HepG2 (cell line): ENCODE measurements at regions of chr1 and their contacts with region 1.

Region 1: GRCh38 chr1:32247983-32248889 is 1.2 kb downstream of the FAM167B start:
- DNase-seq: peak; percentile 59
- ATAC-seq: peak; percentile 71
- H3K4me3 ChIP-seq: peak overlapping the region in 2 of 3 experiments; percentile 8 to 58; a peak in 2 of 6 replicates
- H3K27ac ChIP-seq: no peak overlapping the region
- H3K4me1 ChIP-seq: peaks cover 83% of the 10 kb centered on the region
- H3K27me3 ChIP-seq: no peaks in the 10 kb centered on the region
- CTCF ChIP-seq: peak; percentile 98
- EP300 ChIP-seq: no peak
- POLR2A ChIP-seq: no peak
- RAD21 ChIP-seq: peak; percentile 94

Region 2: GRCh38 chr1:32234792-32235191 is 13.4 kb before region 1 on chr1:
- CTCF ChIA-PET with region 1: no interaction called
- POLR2A ChIA-PET with region 1: interaction called, 28 read pairs
- in situ Hi-C with region 1: no loop called
- intact Hi-C with region 1: no loop called
- DNase-seq: no peak
- ATAC-seq: peak; percentile 19; the same call in 2 of the 3 replicates
- H3K4me3 ChIP-seq: no peak overlapping the region
- H3K27ac ChIP-seq: no peak overlapping the region
- H3K4me1 ChIP-seq: peaks cover 14% of the 10 kb centered on the region
- H3K27me3 ChIP-seq: no peaks in the 10 kb centered on the region
- CTCF ChIP-seq: peak; percentile 36
- EP300 ChIP-seq: no peak
- POLR2A ChIP-seq: no peak
- RAD21 ChIP-seq: no peak

Region 3: DNA sequence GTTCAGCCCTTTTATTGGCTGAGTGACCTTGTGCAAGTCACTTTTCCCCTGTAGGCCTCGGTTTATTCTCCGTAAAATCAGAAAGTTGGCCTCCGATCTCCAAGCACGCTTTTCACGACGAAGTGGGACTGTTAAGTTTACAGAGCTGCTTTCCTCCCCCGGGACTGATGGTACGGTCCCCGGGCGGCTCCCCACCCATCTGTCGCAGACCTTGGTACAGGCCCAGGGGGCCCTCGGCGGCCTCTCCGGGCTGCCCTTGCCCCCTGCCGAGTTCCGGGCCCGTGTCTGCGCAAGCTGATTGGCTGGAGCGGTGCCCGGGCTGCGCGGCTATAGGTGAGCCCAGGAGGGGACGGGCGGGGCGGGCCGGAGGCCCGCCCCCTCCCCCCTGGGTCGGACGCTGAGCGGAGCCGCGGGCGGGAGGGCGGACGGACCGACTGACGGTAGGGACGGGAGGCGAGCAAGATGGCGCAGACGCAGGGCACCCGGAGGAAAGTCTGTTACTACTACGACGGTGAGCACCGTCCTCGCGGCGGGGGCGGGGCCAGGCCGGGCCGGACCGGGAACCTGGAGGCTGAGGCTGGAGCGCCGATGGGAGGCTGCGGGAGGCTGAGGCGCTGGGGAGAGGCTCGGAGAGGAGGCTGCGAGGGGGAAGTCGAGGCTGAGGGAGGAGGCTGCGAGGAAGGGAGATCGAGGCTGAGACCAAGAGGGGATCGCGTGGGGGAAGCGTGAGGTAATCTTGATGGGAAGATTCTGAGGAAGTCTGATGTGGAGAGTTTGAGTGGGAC is 43.7 kb after region 1 on chr1 and contains the start of gene HDAC1:
- CTCF ChIA-PET with region 1: no interaction called
- POLR2A ChIA-PET with region 1: interaction called, 48 read pairs
- in situ Hi-C with region 1: no loop called
- intact Hi-C with region 1: loop called (anchors 1 kb)
- DNase-seq: peak; percentile 93
- ATAC-seq: peak; percentile 98
- H3K4me3 ChIP-seq: peak within 1 kb of the TSS; percentile 94 to 99 (median 98)
- H3K27ac ChIP-seq: peak within 1 kb of the TSS; percentile 67
- H3K4me1 ChIP-seq: peaks cover 64% of the 10 kb centered on the region
- H3K27me3 ChIP-seq: no peaks in the 10 kb centered on the region; a peak in 1 of 5 replicates
- CTCF ChIP-seq: no peak; the same call in 1 of the 2 replicates
- EP300 ChIP-seq: peak in 1 of 2 experiments; percentile 50; a peak in 2 of 4 replicates
- POLR2A ChIP-seq: peak; percentile 28 to 85; a peak in 3 of 4 replicates
- RAD21 ChIP-seq: 0 out of 2 replicates have a peak, but pooled peaks have one; percentile 10
- total RNA-seq, gene HDAC1: 93.5 and 109 TPM in 2 replicates

Region 4: DNA sequence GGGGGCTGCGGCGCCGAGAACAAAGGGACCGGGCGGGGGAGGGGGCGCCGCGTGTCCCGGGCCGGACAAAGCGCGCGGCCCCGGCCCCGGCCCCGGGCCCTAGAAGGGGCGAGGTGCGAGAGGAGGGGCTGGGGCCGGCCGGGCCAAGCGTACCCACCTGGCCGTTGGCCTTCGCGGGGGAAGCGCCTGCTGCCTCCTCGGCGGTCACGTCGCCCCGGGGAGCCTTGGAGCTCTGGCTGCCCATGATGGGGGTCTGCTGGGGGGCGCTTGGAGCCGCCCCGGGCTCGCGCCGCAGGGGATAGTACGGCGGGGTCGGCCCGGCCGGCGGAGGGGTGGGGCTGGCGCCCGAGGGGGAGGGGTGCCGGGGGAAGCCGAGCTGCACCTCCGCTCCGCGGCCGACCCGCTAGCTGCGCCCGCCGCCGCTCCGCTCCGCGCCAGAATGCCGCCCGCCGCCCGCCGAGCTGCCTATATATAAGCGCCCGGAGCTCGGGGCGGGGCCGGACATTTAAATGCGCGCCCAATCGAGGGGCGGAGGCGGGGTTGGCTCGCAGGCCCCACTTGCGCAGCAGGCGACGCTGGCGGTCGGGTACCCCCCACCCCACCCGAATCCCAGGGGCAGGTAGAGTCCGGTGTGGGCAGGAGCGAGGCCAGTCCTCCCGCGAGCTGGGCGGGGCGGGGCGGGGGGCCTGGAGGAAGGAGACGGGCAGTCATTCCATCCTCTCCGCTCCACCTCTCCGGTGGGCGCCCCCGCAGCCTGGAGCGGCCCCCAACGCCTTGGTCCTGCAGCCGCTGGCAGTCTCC is 87.8 kb after region 1 on chr1 and contains the start of gene MARCKSL1:
- CTCF ChIA-PET with region 1: no interaction called
- POLR2A ChIA-PET with region 1: interaction called, 22 read pairs
- in situ Hi-C with region 1: no loop called
- intact Hi-C with region 1: no loop called
- DNase-seq: peak; percentile 63
- ATAC-seq: peak; percentile 49
- H3K4me3 ChIP-seq: peak within 1 kb of the TSS; percentile 70 to 95 (median 84)
- H3K27ac ChIP-seq: peak within 1 kb of the TSS; percentile 68
- H3K4me1 ChIP-seq: peaks cover 57% of the 10 kb centered on the region
- H3K27me3 ChIP-seq: peaks cover 0 to 4% of the 10 kb centered on the region in 2 experiments; a peak in 2 of 5 replicates
- CTCF ChIP-seq: no peak
- EP300 ChIP-seq: no peak
- POLR2A ChIP-seq: peak; percentile 91 to 93
- RAD21 ChIP-seq: no peak
- total RNA-seq, gene MARCKSL1: 81.9 and 85.1 TPM in 2 replicates